ENCODE measurements at regions of chr2 and their contacts with region 1.

Region 1: GRCh38 chr2:55168221-55169154 is 63.6 kb downstream of the CLHC1 start:
- DNase-seq: no peak
- H3K4me3 ChIP-seq: no peak overlapping the region
- H3K27ac ChIP-seq: peak overlapping the region; percentile 72
- H3K27me3 ChIP-seq: no peaks in the 10 kb centered on the region
- CTCF ChIP-seq: peak; percentile 73

Region 2: DNA sequence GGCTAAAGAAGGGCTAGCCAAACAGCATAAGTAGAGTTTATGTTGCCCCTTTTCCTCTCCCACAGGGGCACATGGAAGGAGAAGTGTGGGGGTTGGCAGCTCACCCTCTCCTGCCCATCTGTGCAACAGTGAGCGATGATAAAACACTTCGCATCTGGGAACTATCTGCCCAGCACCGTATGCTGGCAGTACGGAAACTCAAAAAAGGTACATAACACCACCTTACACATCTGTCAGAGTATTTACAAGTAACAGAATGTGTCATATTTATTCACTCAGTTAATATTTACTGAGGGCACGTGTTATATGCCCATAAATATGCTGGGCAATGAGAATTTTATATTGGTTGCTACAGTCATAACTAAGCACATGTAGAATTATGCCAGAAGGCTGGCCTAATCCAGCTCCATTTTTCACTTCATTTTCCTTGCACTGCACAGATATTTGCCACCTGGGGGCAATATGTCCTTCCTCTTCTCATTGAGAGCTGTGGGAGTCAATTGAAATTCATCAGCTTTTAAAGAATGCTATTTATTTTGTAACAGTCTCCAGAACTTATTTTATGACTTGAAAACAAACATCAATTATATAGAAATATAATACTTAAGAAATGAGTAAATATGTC is 268.8 kb before region 1 on chr2:
- CTCF ChIA-PET with region 1: interaction called, 91 read pairs
- POLR2A ChIA-PET with region 1: no interaction called
- DNase-seq: peak; percentile 18
- H3K4me3 ChIP-seq: no peak overlapping the region
- H3K27ac ChIP-seq: no peak overlapping the region
- H3K27me3 ChIP-seq: no peaks in the 10 kb centered on the region
- CTCF ChIP-seq: peak; percentile 73

Region 3: GRCh38 chr2:55014962-55015939 is 153.2 kb before region 1 on chr2:
- CTCF ChIA-PET with region 1: interaction called, 39 read pairs
- POLR2A ChIA-PET with region 1: no interaction called
- DNase-seq: peak; percentile 21
- H3K4me3 ChIP-seq: no peak overlapping the region
- H3K27ac ChIP-seq: no peak overlapping the region
- H3K27me3 ChIP-seq: no peaks in the 10 kb centered on the region
- CTCF ChIP-seq: peak; percentile 61

Region 4: DNA sequence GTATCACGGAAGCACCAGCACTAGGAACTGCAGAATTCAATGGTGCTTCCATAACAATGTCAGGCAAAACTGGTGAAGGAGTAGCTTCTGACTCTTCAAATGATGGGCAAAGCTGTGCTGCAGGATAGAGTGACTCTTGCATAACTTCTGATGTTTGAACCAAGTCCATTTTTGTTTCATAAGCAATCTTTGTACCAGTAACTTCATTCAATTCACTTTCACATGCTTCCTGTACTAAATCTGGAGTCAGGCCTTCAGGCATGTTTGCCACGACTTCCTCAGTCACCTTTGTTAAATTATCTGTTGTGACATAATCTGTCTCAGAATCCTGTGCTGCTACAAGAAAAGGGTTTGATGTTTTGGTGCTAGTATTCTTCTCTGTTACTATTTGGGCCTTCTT is 142.3 kb before region 1 on chr2:
- CTCF ChIA-PET with region 1: interaction called, 11 read pairs
- POLR2A ChIA-PET with region 1: no interaction called
- DNase-seq: no peak
- H3K4me3 ChIP-seq: no peak overlapping the region
- H3K27ac ChIP-seq: no peak overlapping the region
- H3K27me3 ChIP-seq: no peaks in the 10 kb centered on the region
- CTCF ChIP-seq: no peak

Region 5: DNA sequence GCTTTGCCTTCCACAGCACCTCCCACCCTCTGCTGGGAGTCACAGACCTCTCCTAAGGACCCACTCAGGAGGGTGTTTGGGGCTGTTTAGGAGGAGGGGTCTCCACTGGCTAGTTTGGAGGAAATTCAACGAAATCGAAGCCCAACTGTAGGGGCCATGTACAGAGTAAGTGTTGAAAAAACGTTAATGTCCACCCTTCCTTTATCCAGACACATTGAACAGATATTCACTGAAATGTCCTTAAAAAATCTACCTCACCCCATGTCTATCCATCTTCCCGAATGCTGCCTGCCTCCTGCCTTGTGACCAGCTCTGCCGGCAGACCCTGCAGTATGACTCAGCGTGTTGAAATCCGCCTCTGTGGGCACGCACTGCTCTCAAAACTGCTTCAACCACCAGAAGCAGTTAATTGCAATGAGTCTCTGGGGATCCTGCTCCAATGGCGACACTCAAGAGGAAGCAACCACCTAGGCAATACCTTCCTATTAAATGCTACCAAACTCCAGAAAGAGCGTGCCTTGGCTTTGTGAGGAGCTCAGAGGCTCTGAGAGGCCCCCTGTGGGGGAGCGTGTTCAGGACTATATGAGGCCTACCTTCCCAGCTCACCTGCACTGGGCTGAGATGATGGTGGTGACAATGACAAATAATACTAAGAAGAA is 56.8 kb before region 1 on chr2:
- CTCF ChIA-PET with region 1: interaction called, 13 read pairs
- POLR2A ChIA-PET with region 1: interaction called, 3 read pairs
- DNase-seq: peak; percentile 85
- H3K4me3 ChIP-seq: peak overlapping the region; percentile 15; the same call in 1 of the 2 replicates
- H3K27ac ChIP-seq: peak overlapping the region; percentile 96
- H3K27me3 ChIP-seq: no peaks in the 10 kb centered on the region
- CTCF ChIP-seq: no peak

Region 6: GRCh38 chr2:55204950-55205349 is 36.5 kb after region 1 on chr2:
- CTCF ChIA-PET with region 1: no interaction called
- POLR2A ChIA-PET with region 1: no interaction called
- DNase-seq: no peak
- H3K4me3 ChIP-seq: no peak overlapping the region
- H3K27ac ChIP-seq: no peak overlapping the region
- H3K27me3 ChIP-seq: no peaks in the 10 kb centered on the region
- CTCF ChIP-seq: no peak